MCF 10A (cell line): ENCODE measurements at regions of chr1 and their contacts with region 1.

Region 1: DNA sequence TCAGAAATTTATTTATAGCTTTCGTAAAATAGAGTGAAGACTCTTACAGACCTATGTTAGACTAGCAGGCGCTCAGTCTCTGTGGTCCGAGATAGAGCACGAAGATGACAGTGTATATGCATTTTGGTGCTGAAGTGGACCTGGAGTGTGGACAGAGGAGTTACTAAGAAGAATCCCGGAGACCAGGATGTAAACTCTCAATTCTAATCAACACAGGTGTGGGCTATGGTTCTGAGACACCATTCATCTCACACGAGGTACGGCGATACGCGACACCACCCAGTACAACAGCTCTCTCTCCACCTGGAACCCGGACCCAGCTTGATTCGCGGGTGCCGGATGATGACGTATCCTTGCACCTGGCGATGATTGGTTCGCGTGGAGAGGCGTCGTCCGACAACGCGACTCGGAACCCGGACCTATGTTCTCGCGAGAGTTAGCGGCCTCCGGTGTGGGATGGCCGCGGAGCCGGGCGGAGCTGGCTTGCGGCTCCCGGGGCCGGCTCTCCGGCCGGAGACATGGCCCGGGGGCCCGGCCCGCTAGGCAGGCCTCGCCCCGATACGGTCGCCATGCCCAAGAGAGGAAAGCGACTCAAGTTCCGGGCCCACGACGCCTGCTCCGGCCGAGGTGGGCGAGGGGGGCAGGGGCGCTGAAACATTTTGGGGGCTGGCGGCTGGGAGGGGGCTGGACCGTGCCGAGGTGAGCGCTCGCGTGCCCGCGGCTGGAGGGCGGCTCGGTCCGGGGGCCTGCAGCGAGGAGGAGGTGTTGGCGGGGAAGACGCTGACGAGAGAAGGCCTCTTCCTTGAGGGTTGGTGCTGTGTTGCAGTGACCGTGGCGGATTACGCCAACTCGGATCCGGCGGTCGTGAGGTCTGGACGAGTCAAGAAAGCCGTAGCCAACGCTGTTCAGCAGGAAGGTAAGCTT is at the start of gene TMEM183A:
- DNase-seq: peak; percentile 100
- H3K4me3 Mint-ChIP-seq: peak within 1 kb of the TSS; percentile 99
- H3K27ac Mint-ChIP-seq: peak within 1 kb of the TSS; percentile 98
- H3K4me1 Mint-ChIP-seq: peaks cover 24% of the 10 kb centered on the region
- H3K27me3 Mint-ChIP-seq: no peaks in the 10 kb centered on the region
- CTCF ChIP-seq: no peak
- total RNA-seq, gene TMEM183A: 104 and 108 TPM in 2 replicates

Region 2: DNA sequence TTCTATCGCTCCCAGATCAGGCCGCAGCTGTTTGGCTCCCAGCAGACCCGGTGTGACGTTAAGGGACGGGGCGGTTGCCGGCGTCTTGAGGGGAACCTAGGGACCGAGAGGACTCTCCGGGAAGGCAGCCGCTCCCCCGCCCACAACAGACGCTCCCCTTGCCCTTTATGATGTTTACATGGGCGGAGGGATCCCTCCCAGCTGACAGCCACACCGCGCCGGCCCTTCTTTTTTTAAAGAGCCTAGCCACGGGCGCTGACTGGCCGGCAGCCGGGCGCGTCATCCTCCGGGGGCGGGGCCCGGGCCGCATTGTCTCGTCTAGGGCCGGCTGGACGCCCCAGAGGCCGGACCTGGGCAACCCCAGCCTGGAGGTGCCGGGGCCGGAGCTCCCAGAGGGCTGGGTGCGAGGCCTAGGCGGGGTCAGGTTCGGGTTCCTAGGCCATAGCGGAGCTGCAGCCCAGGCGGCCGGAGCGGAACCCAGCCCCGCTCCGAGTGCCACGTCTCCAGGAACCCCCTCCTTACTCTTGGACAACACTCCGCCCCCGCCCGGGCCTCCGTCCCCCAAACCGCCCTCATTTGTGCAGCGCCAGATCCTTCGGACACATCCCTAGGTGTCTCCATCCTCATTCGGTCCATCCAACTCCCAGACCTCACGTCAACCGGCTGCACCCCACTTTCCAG is 196.5 kb before region 1 on chr1 and contains the start of gene PCAT6:
- CTCF ChIA-PET with region 1: interaction called, 3 read pairs
- POLR2A ChIA-PET with region 1: interaction called, 26 read pairs
- intact Hi-C with region 1: no loop called
- DNase-seq: peak; percentile 99
- H3K4me3 Mint-ChIP-seq: peak within 1 kb of the TSS; percentile 81
- H3K27ac Mint-ChIP-seq: peak within 1 kb of the TSS; percentile 65
- H3K4me1 Mint-ChIP-seq: peaks cover 33% of the 10 kb centered on the region
- H3K27me3 Mint-ChIP-seq: no peaks in the 10 kb centered on the region
- CTCF ChIP-seq: no peak
- total RNA-seq, gene PCAT6: 3.2 and 5.4 TPM in 2 replicates

Region 3: DNA sequence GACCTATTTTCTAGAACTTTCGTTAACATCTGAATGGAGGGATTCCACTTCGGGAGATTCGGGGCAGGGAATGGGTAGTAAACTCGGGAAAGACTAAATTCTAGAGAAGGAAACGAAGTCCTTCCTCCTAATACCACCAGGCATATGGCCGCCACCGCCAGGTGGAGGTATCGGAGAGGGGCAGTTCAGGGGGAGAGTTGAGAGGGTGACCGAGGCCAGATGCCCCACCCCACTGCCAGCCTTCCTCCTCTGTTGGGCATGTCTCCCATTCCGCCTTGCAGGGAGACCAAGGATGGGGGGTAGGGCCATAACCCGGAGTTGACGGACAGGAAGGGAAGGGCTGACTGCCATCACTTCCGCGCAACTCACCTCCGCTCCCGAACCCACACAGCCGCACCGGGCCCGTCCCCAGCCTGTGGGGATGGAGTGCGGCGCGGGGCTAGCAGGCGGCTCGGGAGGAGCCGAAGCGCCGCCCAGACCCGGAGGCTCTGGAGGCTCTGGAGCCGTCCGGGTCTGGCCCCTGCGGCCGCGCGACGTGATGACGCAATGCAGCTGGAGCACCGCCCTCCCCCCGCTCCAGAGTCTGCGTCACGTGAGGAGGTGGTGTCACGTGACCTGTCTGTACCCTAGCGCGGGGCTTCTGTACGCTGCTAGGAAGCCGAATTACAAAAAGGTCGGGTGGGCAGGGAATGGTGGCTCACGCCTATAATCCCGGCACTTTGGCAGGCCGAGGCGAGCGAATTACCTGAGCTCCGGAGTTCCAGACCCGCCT is 80.3 kb before region 1 on chr1 and contains the start of gene KLHL12:
- CTCF ChIA-PET with region 1: interaction called, 7 read pairs
- POLR2A ChIA-PET with region 1: interaction called, 24 read pairs
- intact Hi-C with region 1: no loop called
- DNase-seq: peak; percentile 99
- H3K4me3 Mint-ChIP-seq: peak within 1 kb of the TSS; percentile 95
- H3K27ac Mint-ChIP-seq: peak within 1 kb of the TSS; percentile 93
- H3K4me1 Mint-ChIP-seq: peaks cover 38% of the 10 kb centered on the region
- H3K27me3 Mint-ChIP-seq: no peaks in the 10 kb centered on the region
- CTCF ChIP-seq: peak; percentile 87
- total RNA-seq, gene KLHL12: 51.0 and 59.0 TPM in 2 replicates

Region 4: DNA sequence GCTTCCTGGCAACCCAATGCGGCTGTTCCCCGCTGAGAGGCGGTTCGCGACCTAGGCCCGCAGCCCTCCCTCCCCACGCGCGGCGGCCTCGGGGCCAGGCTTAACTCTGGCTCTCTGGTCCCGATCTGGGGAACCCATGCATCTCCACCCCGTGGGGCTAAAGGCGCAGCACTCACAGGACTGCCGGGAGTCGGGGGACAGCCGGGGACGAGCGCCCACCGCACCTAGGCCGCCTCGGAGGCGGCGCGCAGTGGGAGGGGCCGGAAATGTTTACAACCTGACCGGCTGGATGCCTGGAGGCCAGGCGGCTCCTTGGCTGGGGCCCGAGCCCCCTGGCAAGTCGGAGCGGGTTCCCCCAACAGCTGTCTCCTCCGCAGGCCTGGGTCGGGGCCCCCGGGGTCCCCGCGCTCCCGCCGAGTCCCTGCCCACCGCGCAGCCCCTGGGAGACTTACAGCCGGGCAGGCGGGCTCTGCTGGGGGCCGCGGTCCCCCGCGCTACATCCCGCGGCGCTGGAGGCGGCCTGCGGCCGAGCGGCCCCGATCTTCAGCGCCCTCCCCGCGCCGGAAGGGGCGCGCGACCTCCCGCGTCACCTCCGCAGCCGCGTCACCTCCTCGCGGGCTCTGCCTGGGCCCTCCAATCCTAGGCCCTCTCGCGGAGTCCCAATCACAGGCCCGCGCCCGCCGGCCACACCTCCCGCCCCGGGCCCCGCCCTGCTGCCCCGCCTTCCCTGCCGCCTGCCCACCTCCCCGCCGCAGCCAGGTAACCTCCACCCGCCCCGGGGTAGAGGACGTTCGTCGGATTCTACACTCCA is 49.3 kb before region 1 on chr1 and contains the start of gene ADIPOR1:
- CTCF ChIA-PET with region 1: interaction called, 6 read pairs
- POLR2A ChIA-PET with region 1: interaction called, 55 read pairs
- intact Hi-C with region 1: no loop called
- DNase-seq: peak; percentile 96
- H3K4me3 Mint-ChIP-seq: peak within 1 kb of the TSS; percentile 75
- H3K27ac Mint-ChIP-seq: peak within 1 kb of the TSS; percentile 65
- H3K4me1 Mint-ChIP-seq: peaks cover 60% of the 10 kb centered on the region
- H3K27me3 Mint-ChIP-seq: no peaks in the 10 kb centered on the region
- CTCF ChIP-seq: peak; percentile 19
- total RNA-seq, gene ADIPOR1: 157 and 168 TPM in 2 replicates

Region 5: GRCh38 chr1:202976633-202977032 is 30.6 kb before region 1 on chr1:
- CTCF ChIA-PET with region 1: interaction called, 4 read pairs
- POLR2A ChIA-PET with region 1: interaction called, 30 read pairs
- intact Hi-C with region 1: no loop called
- DNase-seq: no peak
- H3K4me3 Mint-ChIP-seq: no peak overlapping the region
- H3K27ac Mint-ChIP-seq: no peak overlapping the region
- H3K4me1 Mint-ChIP-seq: peaks cover 5% of the 10 kb centered on the region
- H3K27me3 Mint-ChIP-seq: peaks cover 48% of the 10 kb centered on the region
- CTCF ChIP-seq: no peak

Region 6: GRCh38 chr1:203026031-203026989 is 19.1 kb after region 1 on chr1 and contains the start of gene PPFIA4:
- CTCF ChIA-PET with region 1: interaction called, 8 read pairs
- POLR2A ChIA-PET with region 1: interaction called, 51 read pairs
- intact Hi-C with region 1: no loop called
- DNase-seq: peak; percentile 93
- H3K4me3 Mint-ChIP-seq: peak within 1 kb of the TSS; percentile 68
- H3K27ac Mint-ChIP-seq: peak within 1 kb of the TSS; percentile 63
- H3K4me1 Mint-ChIP-seq: peaks cover 8% of the 10 kb centered on the region
- H3K27me3 Mint-ChIP-seq: peaks cover 11% of the 10 kb centered on the region
- CTCF ChIP-seq: no peak
- total RNA-seq, gene PPFIA4: 0.16 and 0.49 TPM in 2 replicates

Region 7: DNA sequence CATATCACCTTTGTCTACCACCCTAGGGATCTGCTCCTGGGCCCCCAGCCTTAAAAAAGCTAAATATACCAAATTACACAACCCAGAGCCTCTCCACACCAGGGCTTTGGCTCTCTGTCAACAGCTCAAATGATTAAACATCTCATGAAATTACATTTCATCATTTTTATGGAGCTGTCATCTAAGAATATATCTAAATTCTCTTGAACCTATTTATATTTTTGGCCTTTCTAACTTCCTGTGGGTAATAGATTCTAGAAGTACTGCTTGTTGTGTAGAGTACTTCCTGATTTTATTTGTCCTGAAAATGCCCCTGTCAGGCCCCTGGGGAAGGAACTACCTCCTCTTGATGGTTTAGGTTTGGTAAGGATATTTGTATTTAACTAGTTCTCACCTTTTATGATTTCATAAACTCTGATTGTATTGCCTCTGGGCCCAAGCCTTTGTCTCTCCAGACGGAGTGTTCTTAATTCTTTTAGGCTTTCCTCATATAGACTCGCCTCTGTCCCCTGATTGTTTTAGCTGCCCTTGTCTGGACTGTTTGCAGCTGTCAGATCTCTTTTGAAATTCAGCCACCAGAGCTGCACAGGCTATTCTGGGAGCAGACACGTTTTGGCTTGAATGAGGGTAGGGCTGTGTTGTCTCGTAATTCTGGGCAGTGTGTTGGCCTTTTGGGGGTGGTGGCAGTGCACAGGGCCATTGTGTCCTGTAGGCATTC is 62.0 kb after region 1 on chr1:
- CTCF ChIA-PET with region 1: no interaction called
- POLR2A ChIA-PET with region 1: no interaction called
- intact Hi-C with region 1: no loop called
- DNase-seq: no peak
- H3K4me3 Mint-ChIP-seq: no peak overlapping the region
- H3K27ac Mint-ChIP-seq: no peak overlapping the region
- H3K4me1 Mint-ChIP-seq: peaks cover 20% of the 10 kb centered on the region
- H3K27me3 Mint-ChIP-seq: peaks cover 10% of the 10 kb centered on the region
- CTCF ChIP-seq: no peak